Activated CD4-positive, alpha-beta T cell treated with anti-CD3 and anti-CD28 coated beads, Interleukin-2, amount 10 ng/mL, durations not matched to agents 24 days and 14 days (primary cell): ENCODE measurements at regions of chr6 and their contacts with region 1.

Region 1: GRCh38 chr6:30821862-30822782 is 62.2 kb upstream of the DDR1 start:
- DNase-seq: peak; percentile 75
- H3K4me3 Mint-ChIP-seq: no peak overlapping the region
- H3K27ac Mint-ChIP-seq: peak overlapping the region; percentile 77
- H3K4me1 Mint-ChIP-seq: peaks cover 67% of the 10 kb centered on the region
- H3K27me3 Mint-ChIP-seq: no peaks in the 10 kb centered on the region

Region 2: DNA sequence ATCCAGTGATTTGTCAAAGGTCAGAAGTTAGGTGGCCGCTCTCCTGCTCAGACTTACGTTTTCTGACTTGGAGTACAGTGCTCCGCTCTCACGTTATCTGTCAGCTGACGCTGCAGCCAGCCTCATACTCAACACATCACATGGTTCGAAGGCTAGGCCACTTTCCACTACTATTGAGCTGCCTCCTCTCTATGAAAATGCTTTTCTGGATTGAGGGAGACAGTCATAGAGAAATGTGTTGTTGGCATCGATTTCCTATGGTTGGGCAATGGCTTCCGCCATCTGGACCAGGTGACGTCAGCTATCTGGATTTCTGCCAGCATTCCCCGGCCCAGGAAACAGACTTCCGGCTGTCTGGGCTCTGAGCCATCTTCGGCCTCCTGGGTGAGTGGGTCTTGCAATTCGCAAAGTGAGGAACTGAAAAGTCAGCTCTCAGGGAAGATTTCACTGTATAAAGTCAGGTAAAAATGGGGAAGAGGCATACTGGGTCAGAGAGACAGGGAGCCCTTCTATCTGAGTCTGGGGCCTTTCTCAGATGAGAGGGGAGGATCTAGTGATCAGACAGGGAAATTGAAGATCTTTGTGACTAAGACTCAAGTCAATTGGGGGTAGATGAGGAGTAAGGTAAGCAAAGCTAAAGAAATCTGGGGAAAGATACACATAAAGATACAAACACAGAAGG is 40.2 kb before region 1 on chr6:
- intact Hi-C with region 1: no loop called
- DNase-seq: peak; percentile 73
- H3K4me3 Mint-ChIP-seq: peak overlapping the region; percentile 57
- H3K27ac Mint-ChIP-seq: peak overlapping the region; percentile 94
- H3K4me1 Mint-ChIP-seq: peaks cover 69% of the 10 kb centered on the region
- H3K27me3 Mint-ChIP-seq: no peaks in the 10 kb centered on the region

Region 3: GRCh38 chr6:30836431-30836866 is 14.3 kb after region 1 on chr6:
- intact Hi-C with region 1: no loop called
- DNase-seq: no peak
- H3K4me3 Mint-ChIP-seq: no peak overlapping the region
- H3K27ac Mint-ChIP-seq: no peak overlapping the region
- H3K4me1 Mint-ChIP-seq: peaks cover 30% of the 10 kb centered on the region
- H3K27me3 Mint-ChIP-seq: no peaks in the 10 kb centered on the region

Region 4: GRCh38 chr6:30877419-30878371 is 55.6 kb after region 1 on chr6:
- intact Hi-C with region 1: loop called (anchors 1 kb)
- DNase-seq: peak; percentile 92
- H3K4me3 Mint-ChIP-seq: peak overlapping the region; percentile 76
- H3K27ac Mint-ChIP-seq: peak overlapping the region; percentile 85
- H3K4me1 Mint-ChIP-seq: peaks cover 37% of the 10 kb centered on the region
- H3K27me3 Mint-ChIP-seq: peaks cover 3% of the 10 kb centered on the region

Region 5: GRCh38 chr6:30974488-30975252 is 152.5 kb after region 1 on chr6:
- intact Hi-C with region 1: no loop called
- DNase-seq: no peak
- H3K4me3 Mint-ChIP-seq: no peak overlapping the region
- H3K27ac Mint-ChIP-seq: no peak overlapping the region
- H3K4me1 Mint-ChIP-seq: no peaks in the 10 kb centered on the region
- H3K27me3 Mint-ChIP-seq: peaks cover 37% of the 10 kb centered on the region

Region 6: GRCh38 chr6:31128093-31128676 is 306.1 kb after region 1 on chr6:
- intact Hi-C with region 1: no loop called
- DNase-seq: peak; percentile 92
- H3K4me3 Mint-ChIP-seq: no peak overlapping the region
- H3K27ac Mint-ChIP-seq: no peak overlapping the region
- H3K4me1 Mint-ChIP-seq: peaks cover 6% of the 10 kb centered on the region
- H3K27me3 Mint-ChIP-seq: peaks cover 19% of the 10 kb centered on the region